ENCODE measurements at regions of chr11 and their contacts with region 1.

Region 1: DNA sequence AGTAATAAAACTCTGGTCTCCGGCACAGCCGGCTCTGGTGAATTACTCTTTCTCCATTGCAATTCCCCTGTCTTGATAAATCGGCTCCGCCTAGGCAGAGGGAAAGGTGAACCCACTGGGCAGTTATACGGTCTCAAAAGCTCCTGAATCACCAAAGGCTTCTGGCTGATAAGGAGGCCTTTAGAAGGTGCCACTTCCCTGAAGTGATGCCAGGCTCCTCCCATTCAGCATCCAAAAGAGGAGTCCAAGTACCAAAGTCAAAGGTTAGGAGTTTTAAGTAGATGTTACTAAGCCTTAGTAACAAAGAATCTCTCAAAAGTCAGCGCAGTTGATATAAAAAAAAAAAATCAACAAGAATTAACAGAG is 11.8 kb upstream of the ALKBH8 start:
- DNase-seq: no peak
- H3K4me3 ChIP-seq: no peak overlapping the region
- H3K27ac ChIP-seq: no peak overlapping the region
- H3K4me1 ChIP-seq: no peaks in the 10 kb centered on the region
- H3K27me3 ChIP-seq: no peaks in the 10 kb centered on the region
- CTCF ChIP-seq: no peak
- POLR2A ChIP-seq: no peak

Region 2: GRCh38 chr11:107770551-107770951 is 193.2 kb after region 1 on chr11:
- intact Hi-C with region 1: loop called (anchors 5 kb)
- DNase-seq: no peak
- H3K4me3 ChIP-seq: no peak overlapping the region
- H3K27ac ChIP-seq: no peak overlapping the region
- H3K4me1 ChIP-seq: no peaks in the 10 kb centered on the region
- H3K27me3 ChIP-seq: no peaks in the 10 kb centered on the region
- CTCF ChIP-seq: no peak
- POLR2A ChIP-seq: no peak

Measured in prostate gland (tissue), 2 donors.